GM10248 (cell line): ENCODE measurements at regions of chr7 and their contacts with region 1.

Region 1: DNA sequence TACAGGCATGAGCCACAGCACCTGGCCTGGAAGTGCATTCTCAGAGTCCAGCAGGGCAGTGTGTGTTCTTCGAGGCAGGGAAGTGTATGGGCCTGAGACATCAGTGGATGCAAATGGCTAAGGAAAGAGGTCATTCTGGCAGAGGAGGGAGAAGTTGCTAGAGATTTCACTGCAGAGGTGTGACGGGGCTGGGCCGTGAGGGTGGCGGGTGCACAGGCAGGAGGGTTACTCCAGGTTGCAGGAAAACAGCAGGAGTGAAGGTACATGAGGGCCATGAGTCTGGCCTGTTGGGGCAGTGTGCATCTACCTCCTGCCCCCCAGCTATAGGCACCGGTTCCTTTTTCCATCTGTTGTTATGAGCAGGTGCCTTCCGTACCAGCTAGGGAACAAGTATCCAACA is 29.3 kb downstream of the COL26A1 start:
- DNase-seq: no peak
- CTCF ChIP-seq: no peak

Region 2: GRCh38 chr7:101357433-101357832 is 34.6 kb before region 1 on chr7:
- CTCF ChIA-PET with region 1: no interaction called
- POLR2A ChIA-PET with region 1: no interaction called
- DNase-seq: no peak
- CTCF ChIP-seq: no peak

Region 3: GRCh38 chr7:101420436-101420835 is 28.4 kb after region 1 on chr7:
- CTCF ChIA-PET with region 1: no interaction called
- POLR2A ChIA-PET with region 1: interaction called, 12 read pairs
- DNase-seq: no peak
- CTCF ChIP-seq: no peak

Region 4: GRCh38 chr7:101669307-101669706 is 277.3 kb after region 1 on chr7:
- CTCF ChIA-PET with region 1: no interaction called
- POLR2A ChIA-PET with region 1: no interaction called
- DNase-seq: no peak
- CTCF ChIP-seq: no peak

Region 5: DNA sequence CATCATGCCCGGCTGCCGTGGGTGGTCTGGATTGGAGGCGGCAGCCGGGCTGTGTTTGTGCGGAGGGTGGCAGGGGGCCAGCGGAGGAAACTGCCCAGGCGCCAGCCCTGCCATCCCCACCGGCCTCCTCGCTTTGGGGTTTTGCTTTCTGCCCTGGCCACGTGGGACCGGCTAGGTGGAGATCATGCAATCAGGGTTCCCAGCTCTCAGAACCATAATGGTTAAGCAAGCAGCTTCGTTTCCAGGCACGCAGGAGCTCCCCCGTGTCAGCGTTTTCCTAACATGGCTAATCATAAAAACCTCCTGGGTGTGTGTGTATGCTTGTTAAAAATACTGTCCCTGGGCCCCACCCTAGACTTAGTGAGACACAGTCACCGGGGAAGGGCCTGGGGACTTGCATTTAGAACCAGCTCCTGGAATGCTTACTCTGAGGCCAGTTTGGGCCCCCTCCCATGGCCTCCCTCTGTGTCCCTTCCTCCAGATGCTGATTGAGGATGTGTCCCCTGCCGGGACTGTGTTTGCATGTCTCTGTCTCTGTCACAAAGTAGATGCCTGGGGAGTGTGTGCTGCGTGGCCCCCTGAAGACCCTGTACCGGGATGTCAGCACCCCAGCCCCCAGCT is 544.7 kb after region 1 on chr7:
- CTCF ChIA-PET with region 1: no interaction called
- POLR2A ChIA-PET with region 1: no interaction called
- DNase-seq: no peak
- CTCF ChIP-seq: no peak